ENCODE measurements at regions of chr19 and their contacts with region 1.

Region 1: GRCh38 chr19:1131738-1132551 is 28.2 kb downstream of the GPX4 start:
- DNase-seq: peak; percentile 69 to 87 (median 85)
- ATAC-seq: peak; percentile 80
- H3K4me3 ChIP-seq: peak overlapping the region; percentile 81
- H3K4me3 Mint-ChIP-seq: peak overlapping the region; percentile 78 to 94 (median 85)
- H3K27ac ChIP-seq: peak overlapping the region; percentile 98
- H3K27ac Mint-ChIP-seq: peak overlapping the region; percentile 88 to 93 (median 92)
- H3K4me1 ChIP-seq: peaks cover 23 to 42% of the 10 kb centered on the region in 2 donors
- H3K4me1 Mint-ChIP-seq: peaks cover 13 to 45% (median 29%) of the 10 kb centered on the region in 7 donors
- H3K27me3 ChIP-seq: no peaks in the 10 kb centered on the region
- H3K27me3 Mint-ChIP-seq: no peaks in the 10 kb centered on the region

Region 2: DNA sequence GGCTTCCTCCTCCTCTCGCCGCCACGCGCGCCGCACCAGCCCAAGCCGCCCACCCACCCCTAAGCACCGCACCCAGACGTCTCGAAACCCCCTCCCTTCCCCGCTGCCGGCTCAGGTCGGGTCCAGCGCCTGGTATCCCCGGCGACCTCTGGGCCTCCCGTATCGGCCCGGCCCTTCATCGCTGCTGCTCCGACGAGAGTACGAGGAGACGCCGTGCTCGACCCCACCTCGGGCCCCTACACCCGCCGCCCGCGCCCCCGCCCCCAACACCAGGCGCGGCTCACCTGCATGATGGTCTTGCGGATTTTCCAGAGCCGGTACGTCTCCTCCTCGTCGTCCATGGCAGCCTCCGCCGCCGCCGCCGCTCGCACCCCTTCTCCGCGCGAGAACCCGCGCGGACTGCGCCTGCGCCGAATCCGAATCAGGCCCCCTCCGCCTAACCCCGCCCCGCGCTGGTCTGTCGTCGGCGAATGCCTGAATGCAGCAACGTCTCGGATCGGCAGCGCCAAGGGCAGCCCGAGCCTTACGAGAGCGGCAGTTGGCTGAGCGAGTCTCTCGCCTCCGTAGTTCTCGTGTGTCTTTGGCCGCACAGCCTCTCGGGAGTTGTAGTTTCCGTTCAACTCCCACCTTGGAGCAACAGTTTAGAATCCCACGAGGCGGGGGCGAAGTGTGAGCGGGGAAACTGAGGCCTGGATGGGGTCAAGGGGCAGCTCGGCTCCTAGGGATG is 36.8 kb before region 1 on chr19 and contains the start of gene POLR2E:
- CTCF ChIA-PET with region 1: no interaction called
- POLR2A ChIA-PET with region 1: interaction called, 3 read pairs
- intact Hi-C with region 1: loop called in 1 of 2 experiments (anchors 2 kb)
- DNase-seq: peak; percentile 97 to 99 (median 99)
- ATAC-seq: peak; percentile 98
- H3K4me3 ChIP-seq: peak within 1 kb of the TSS; percentile 68
- H3K4me3 Mint-ChIP-seq: peak within 1 kb of the TSS; percentile 80 to 97 (median 92)
- H3K27ac ChIP-seq: peak within 1 kb of the TSS; percentile 71
- H3K27ac Mint-ChIP-seq: peak within 1 kb of the TSS; percentile 87 to 97 (median 93)
- H3K4me1 ChIP-seq: peaks cover 18 to 23% of the 10 kb centered on the region in 2 donors
- H3K4me1 Mint-ChIP-seq: peaks cover 10 to 59% (median 44%) of the 10 kb centered on the region in 7 donors
- H3K27me3 ChIP-seq: no peaks in the 10 kb centered on the region
- H3K27me3 Mint-ChIP-seq: no peaks in the 10 kb centered on the region
- total RNA-seq, gene POLR2E: 75.3 to 157 (median 82.1) TPM

Region 3: DNA sequence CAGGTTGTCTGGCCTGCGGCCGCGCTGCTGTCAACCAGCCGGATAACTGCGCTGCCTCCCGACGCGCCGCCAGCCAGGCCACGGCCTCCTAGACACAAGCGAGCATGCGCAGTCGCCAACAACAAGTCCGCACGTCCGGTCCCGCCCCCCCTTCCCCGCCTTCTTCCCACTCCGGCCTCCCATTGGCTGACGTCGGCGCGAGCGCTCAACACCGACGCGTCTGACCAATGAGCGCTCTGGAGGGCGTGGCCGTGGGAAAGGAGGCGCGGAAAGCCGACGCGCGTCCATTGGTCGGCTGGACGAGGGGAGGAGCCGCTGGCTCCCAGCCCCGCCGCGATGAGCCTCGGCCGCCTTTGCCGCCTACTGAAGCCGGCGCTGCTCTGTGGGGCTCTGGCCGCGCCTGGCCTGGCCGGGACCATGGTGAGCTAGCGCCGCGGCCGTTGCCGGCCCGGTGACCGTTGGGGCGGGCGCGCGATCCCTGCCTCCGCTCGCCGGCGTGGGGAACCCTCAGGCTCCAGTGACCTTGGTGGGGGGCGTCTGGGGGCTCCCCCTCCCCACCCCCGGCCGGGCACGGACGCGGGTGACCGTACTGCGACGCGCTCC is 28.1 kb before region 1 on chr19 and contains the start of gene GPX4:
- CTCF ChIA-PET with region 1: no interaction called
- POLR2A ChIA-PET with region 1: interaction called, 6 read pairs
- intact Hi-C with region 1: loop called (anchors 1 to 2 kb)
- DNase-seq: peak; percentile 90 to 98 (median 95)
- ATAC-seq: peak; percentile 91
- H3K4me3 ChIP-seq: peak within 1 kb of the TSS; percentile 79
- H3K4me3 Mint-ChIP-seq: peak within 1 kb of the TSS; percentile 66 to 82 (median 78)
- H3K27ac ChIP-seq: peak within 1 kb of the TSS; percentile 100
- H3K27ac Mint-ChIP-seq: peak within 1 kb of the TSS; percentile 79 to 96 (median 93)
- H3K4me1 ChIP-seq: peaks cover 13 to 18% of the 10 kb centered on the region in 2 donors
- H3K4me1 Mint-ChIP-seq: peaks cover 17 to 48% (median 36%) of the 10 kb centered on the region in 7 donors
- H3K27me3 ChIP-seq: no peaks in the 10 kb centered on the region
- H3K27me3 Mint-ChIP-seq: no peaks in the 10 kb centered on the region
- total RNA-seq, gene GPX4: 122 to 235 (median 194) TPM

Region 4: DNA sequence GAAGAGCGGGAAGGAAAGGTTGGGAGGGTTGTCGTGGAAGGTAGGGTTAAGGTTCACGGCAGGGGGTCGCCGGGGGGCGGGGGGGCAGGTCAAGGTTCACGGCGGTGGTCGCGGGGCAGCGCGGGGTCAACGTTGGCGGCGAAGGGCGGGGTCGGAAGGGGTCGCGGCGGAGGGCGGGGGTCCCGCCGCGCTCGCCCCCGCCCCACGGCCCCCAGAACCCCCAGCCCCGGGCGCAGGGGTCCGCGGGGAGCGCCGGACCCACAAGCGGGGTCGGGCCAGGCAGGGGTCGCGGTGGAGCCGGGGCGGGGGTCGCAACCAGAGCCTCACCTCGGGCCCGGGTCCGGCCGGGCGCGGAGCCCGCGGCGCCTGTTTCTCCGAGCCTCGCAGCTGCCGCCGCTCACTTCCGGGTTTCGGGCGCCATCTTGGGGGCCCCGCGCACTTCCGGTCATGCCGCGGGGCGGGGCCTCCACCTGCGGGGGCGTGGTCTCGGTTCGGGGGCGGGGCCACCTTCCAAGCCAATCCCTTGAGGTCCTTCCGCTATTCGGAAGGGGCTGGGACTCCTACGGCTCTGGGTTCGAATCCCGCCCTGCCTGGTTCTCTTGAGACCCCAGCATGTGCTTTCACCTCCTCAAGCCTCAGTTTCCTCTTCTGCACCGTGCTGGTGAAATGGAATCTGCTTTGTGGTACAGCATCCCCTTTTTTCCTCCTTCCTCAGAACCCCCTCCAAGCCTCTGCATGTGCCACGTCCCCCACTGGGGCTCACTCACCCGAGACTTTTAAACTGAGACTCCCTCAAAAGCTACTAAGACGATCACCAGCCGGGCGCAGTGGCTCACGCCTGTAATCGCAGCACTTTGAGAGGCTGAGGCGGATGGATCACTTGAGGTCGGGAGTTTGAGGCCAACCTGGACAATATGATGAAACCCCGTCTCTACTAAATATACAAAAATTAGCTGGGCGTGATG is 42.2 kb after region 1 on chr19 and contains the start of gene SBNO2:
- CTCF ChIA-PET with region 1: no interaction called
- POLR2A ChIA-PET with region 1: interaction called, 8 read pairs
- intact Hi-C with region 1: loop called (anchors 1 to 2 kb)
- DNase-seq: peak; percentile 74 to 98 (median 85)
- ATAC-seq: peak; percentile 96
- H3K4me3 ChIP-seq: peak within 1 kb of the TSS; percentile 77
- H3K4me3 Mint-ChIP-seq: peak within 1 kb of the TSS; percentile 80 to 94 (median 88)
- H3K27ac ChIP-seq: peak within 1 kb of the TSS; percentile 87
- H3K27ac Mint-ChIP-seq: peak within 1 kb of the TSS; percentile 89 to 97 (median 94)
- H3K4me1 ChIP-seq: peaks cover 3 to 17% of the 10 kb centered on the region in 2 donors
- H3K4me1 Mint-ChIP-seq: peaks cover 16 to 43% (median 32%) of the 10 kb centered on the region in 7 donors
- H3K27me3 ChIP-seq: no peaks in the 10 kb centered on the region
- H3K27me3 Mint-ChIP-seq: peaks cover 0 to 2% (median 0%) of the 10 kb centered on the region in 5 donors
- total RNA-seq, gene SBNO2: 88.6 to 137 (median 104) TPM

Region 5: GRCh38 chr19:1189419-1189818 is 57.5 kb after region 1 on chr19:
- CTCF ChIA-PET with region 1: no interaction called
- POLR2A ChIA-PET with region 1: interaction called, 15 read pairs
- intact Hi-C with region 1: loop called (anchors 5 kb)
- DNase-seq: peak in 1 of 9 donors; percentile 67
- ATAC-seq: peak; percentile 57
- H3K4me3 ChIP-seq: no peak overlapping the region
- H3K4me3 Mint-ChIP-seq: peak overlapping the region in 5 of 10 donors; percentile 33 to 63 (median 58)
- H3K27ac ChIP-seq: no peak overlapping the region
- H3K27ac Mint-ChIP-seq: peak overlapping the region; percentile 44 to 94 (median 79)
- H3K4me1 ChIP-seq: peaks cover 21 to 25% of the 10 kb centered on the region in 2 donors
- H3K4me1 Mint-ChIP-seq: peaks cover 11 to 27% (median 18%) of the 10 kb centered on the region in 7 donors
- H3K27me3 ChIP-seq: no peaks in the 10 kb centered on the region
- H3K27me3 Mint-ChIP-seq: no peaks in the 10 kb centered on the region

Region 6: DNA sequence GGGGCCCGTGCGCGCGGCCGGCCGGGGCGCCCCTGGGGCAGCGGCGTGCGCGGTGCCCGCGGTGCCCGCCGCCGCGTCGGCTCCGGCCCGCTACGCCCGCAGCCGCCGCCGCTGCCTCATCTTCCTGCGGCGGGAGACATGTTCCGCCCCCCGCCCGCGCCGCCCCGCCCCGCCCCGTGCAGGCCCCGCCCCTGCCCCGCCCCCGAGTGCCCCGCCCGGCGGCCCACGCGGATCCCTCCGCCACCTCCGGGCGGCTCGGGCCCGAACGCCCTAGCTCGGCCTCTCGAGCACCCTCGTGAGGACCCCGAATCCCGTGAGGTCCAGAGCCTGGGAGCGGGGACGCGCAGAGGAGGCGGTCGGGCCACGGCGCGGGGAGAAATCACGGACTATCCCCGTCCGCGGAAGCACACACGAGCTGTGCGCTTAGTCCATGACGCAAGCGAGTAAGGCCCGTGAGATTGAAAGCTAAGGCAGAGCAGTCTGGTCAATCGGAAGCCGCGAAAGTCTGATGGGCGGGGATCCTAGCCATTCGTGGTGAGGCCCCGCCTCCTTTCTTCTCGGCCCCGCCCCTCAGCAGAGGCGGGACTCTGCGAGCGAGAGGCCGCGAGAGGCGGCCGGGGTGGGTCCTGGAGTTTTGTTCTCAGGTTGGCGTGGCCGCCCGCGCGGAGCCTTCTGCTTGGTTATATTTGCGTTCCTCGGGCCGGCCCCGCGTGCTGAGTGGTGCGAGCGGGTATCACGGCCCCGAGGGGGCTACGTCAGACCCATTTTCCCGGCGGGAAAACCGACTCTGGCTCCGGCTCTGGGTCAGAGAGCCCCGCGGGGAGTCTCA is 520.7 kb after region 1 on chr19 and contains the start of gene TCF3:
- CTCF ChIA-PET with region 1: no interaction called
- POLR2A ChIA-PET with region 1: no interaction called
- intact Hi-C with region 1: loop called in 1 of 2 experiments (anchors 2 kb)
- DNase-seq: peak; percentile 96 to 100 (median 99)
- ATAC-seq: peak; percentile 96
- H3K4me3 ChIP-seq: peak within 1 kb of the TSS; percentile 86
- H3K4me3 Mint-ChIP-seq: peak within 1 kb of the TSS; percentile 86 to 96 (median 91)
- H3K27ac ChIP-seq: peak within 1 kb of the TSS; percentile 99
- H3K27ac Mint-ChIP-seq: peak within 1 kb of the TSS; percentile 87 to 98 (median 95)
- H3K4me1 ChIP-seq: peaks cover 4 to 8% of the 10 kb centered on the region in 2 donors
- H3K4me1 Mint-ChIP-seq: peaks cover 7 to 14% (median 10%) of the 10 kb centered on the region in 7 donors
- H3K27me3 ChIP-seq: no peaks in the 10 kb centered on the region
- H3K27me3 Mint-ChIP-seq: peaks cover 0 to 4% (median 0%) of the 10 kb centered on the region in 5 donors
- total RNA-seq, gene TCF3: 66.6 to 83.6 (median 78.3) TPM